Stomach (tissue), 19 donors: ENCODE measurements at regions of chr6 and their contacts with region 1.

Region 1: GRCh38 chr6:27081931-27082330 is 165.6 kb upstream of the PRSS16 start:
- DNase-seq: no peak
- H3K4me3 ChIP-seq: no peak overlapping the region
- H3K27ac ChIP-seq: no peak overlapping the region
- H3K4me1 ChIP-seq: peaks cover 0 to 8% (median 5%) of the 10 kb centered on the region in 4 donors
- H3K27me3 ChIP-seq: peaks cover 0 to 67% (median 3%) of the 10 kb centered on the region in 3 donors
- CTCF ChIP-seq: no peak
- EP300 ChIP-seq: no peak
- POLR2A ChIP-seq: no peak

Region 2: GRCh38 chr6:26607434-26608230 is 474.3 kb before region 1 on chr6:
- intact Hi-C with region 1: loop called (anchors 5 kb)
- DNase-seq: peak; percentile 39 to 82
- H3K4me3 ChIP-seq: peak overlapping the region in 2 of 4 donors; percentile 19 to 39
- H3K27ac ChIP-seq: no peak overlapping the region
- H3K4me1 ChIP-seq: no peaks in the 10 kb centered on the region
- H3K27me3 ChIP-seq: peaks cover 0 to 26% (median 6%) of the 10 kb centered on the region in 3 donors
- CTCF ChIP-seq: peak in 4 of 7 experiments; percentile 37 to 63 (median 42)
- EP300 ChIP-seq: no peak
- POLR2A ChIP-seq: no peak

Region 3: GRCh38 chr6:27772261-27773001 is 690.5 kb after region 1 on chr6:
- intact Hi-C with region 1: no loop called
- DNase-seq: peak; percentile 89 to 95
- H3K4me3 ChIP-seq: peak overlapping the region in 1 of 4 donors; percentile 10
- H3K27ac ChIP-seq: no peak overlapping the region
- H3K4me1 ChIP-seq: peaks cover 4 to 24% (median 11%) of the 10 kb centered on the region in 4 donors
- H3K27me3 ChIP-seq: peaks cover 0 to 66% (median 3%) of the 10 kb centered on the region in 3 donors
- CTCF ChIP-seq: peak in 5 of 7 experiments; percentile 72 to 93 (median 88)
- EP300 ChIP-seq: no peak
- POLR2A ChIP-seq: no peak